Posterior vena cava (tissue), 2 donors: ENCODE measurements at regions of chr17 and their contacts with region 1.

Region 1: DNA sequence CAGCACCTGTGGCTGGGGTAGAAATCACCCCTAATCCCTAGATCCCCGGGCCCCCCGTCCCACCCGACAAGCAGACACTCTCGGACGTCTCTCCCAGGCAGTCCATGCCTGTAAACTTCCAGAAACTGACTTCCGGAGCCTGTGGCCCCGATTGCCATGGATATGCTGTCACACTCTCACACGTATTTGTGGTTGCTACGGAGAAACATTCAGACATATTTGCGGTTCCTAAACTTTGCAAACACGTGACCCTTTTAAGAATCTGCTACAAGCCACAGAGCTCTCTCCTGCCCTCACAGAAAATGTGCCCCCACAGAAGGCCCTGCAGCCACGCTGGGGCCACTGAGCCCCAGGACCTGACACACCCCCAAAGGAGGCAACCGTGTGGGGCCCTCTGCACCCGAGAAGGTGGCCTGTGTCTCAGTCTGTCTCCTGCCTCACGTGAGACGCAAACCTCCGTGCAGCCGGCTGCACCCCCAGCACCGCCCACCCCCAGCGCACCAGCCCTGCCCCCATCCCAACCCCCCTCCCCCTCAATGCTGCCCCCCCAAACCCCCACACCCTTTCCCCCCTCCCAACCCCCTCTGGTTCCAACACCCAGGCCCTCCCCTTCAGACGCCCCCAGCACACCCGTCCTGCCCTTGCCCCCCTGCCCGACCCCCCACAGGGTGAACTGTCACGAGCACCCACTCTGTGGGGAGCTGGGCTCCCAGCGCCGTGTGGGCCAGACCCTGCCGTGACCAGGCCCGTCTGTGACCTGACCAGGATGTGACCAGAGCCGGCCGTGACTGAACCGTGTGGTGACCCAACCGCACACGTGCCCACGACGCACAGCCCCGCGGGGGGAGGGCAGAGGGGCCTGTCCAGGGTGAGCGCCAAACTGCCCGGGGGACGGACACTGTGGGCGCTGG is 66.3 kb upstream of the METRNL start:
- DNase-seq: peak; percentile 71

Region 2: DNA sequence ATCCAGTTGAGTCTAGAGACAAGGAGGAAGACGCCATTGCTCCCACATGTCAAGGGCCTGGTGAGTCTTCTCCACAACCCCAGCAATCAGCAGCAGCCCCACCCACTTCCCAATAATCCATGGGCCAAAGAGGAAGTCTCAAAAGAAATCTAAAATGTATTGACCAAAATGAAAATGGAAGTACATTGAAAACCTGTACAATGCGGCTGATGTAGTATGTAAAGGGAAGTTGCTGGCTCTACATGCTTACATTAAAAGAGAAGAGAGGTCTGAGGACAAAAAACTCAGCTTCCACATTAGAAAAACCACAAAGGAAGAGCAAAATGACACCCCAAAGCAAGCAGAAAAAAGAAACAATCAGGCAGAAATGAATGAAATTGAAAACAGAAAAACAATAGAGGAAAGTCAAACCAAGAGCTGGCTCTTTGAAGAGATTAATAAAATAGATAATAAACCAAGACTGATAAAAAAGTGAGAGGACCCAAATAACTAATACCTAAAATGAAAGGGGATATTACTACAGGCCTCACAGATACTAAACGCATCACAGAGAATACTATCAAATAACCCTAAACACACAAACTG is 34.3 kb before region 1 on chr17:
- intact Hi-C with region 1: no loop called
- DNase-seq: no peak

Region 3: DNA sequence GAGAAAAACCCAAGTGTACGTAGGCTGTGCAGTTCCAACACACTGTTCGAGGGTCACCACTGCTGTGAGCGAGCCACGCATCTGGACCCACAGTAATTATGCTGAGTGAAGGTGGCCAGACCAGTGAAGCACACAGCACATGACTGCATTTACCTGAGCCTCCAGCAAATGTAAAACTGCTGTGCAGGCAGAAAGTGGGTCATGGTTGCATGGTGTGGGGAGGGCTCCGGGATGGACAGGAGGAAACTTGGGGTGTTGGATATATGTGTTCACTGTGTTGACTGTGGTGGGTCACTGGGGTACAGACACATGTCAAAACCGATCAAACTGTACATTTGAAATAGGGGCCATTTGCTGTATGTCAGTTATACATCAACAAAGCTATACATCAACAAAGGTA is 12.4 kb before region 1 on chr17:
- intact Hi-C with region 1: loop called in 1 of 2 experiments (anchors 1 kb)
- DNase-seq: no peak